ENCODE measurements at regions of chr3 and their contacts with region 1.

Region 1: DNA sequence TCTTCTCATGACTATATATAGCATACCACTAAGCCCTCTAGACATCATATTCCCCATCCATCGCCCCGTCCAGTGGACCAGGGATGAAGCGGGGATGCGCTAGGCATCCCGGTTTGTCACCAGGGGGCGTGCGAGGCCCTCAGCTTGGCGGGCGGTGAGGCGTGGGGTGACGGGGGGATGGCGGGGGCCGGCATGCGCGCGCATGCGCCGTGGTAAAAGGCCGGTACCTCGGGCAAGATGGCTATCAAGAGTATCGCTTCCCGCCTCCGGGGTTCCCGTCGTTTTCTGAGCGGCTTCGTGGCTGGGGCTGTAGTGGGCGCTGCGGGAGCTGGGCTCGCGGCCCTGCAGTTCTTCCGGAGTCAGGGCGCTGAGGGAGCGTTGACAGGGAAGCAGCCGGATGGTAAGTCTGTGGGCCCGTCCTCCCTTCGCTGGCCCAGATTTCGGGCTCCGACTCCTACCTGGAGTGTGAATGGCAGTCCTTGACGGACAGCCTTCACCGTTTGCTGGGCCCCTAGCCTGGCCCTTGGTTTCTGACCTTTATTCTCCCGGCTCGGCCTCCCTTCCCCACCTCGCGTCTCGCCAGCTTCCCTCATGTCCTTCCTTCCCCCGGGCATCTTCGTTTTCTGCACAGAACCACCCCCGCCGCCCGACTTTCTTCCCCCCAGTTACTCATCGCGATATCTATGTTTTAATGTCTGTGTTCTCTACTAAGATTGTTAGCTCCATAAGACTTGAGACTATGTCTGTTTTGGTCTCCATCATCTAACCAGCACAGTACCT is at the start of gene EXOG:
- DNase-seq: peak; percentile 82
- H3K4me3 ChIP-seq: peak within 1 kb of the TSS; percentile 89
- H3K27ac ChIP-seq: peak within 1 kb of the TSS; percentile 71
- H3K27me3 ChIP-seq: no peaks in the 10 kb centered on the region
- CTCF ChIP-seq: peak; percentile 88
- polyA plus RNA-seq, gene EXOG: 15.1 and 19.3 TPM in 2 replicates

Region 2: GRCh38 chr3:38346587-38347410 is 149.5 kb before region 1 on chr3 and contains the start of gene XYLB:
- CTCF ChIA-PET with region 1: interaction called, 14 read pairs
- POLR2A ChIA-PET with region 1: no interaction called
- DNase-seq: peak; percentile 55
- H3K4me3 ChIP-seq: peak within 1 kb of the TSS; percentile 80
- H3K27ac ChIP-seq: no peak within 1 kb of the TSS
- H3K27me3 ChIP-seq: no peaks in the 10 kb centered on the region
- CTCF ChIP-seq: peak; percentile 83
- polyA plus RNA-seq, gene XYLB: 3.1 and 4.0 TPM in 2 replicates

Region 3: GRCh38 chr3:38454884-38455638 is 41.3 kb before region 1 on chr3:
- CTCF ChIA-PET with region 1: interaction called, 13 read pairs
- POLR2A ChIA-PET with region 1: interaction called, 3 read pairs
- DNase-seq: no peak
- H3K4me3 ChIP-seq: peak overlapping the region; percentile 70
- H3K27ac ChIP-seq: no peak overlapping the region
- H3K27me3 ChIP-seq: no peaks in the 10 kb centered on the region
- CTCF ChIP-seq: no peak

Region 4: GRCh38 chr3:38507120-38507519 is 10.8 kb after region 1 on chr3:
- CTCF ChIA-PET with region 1: interaction called, 23 read pairs
- POLR2A ChIA-PET with region 1: interaction called, 5 read pairs
- DNase-seq: no peak
- H3K4me3 ChIP-seq: no peak overlapping the region
- H3K27ac ChIP-seq: no peak overlapping the region
- H3K27me3 ChIP-seq: no peaks in the 10 kb centered on the region
- CTCF ChIP-seq: no peak

Region 5: DNA sequence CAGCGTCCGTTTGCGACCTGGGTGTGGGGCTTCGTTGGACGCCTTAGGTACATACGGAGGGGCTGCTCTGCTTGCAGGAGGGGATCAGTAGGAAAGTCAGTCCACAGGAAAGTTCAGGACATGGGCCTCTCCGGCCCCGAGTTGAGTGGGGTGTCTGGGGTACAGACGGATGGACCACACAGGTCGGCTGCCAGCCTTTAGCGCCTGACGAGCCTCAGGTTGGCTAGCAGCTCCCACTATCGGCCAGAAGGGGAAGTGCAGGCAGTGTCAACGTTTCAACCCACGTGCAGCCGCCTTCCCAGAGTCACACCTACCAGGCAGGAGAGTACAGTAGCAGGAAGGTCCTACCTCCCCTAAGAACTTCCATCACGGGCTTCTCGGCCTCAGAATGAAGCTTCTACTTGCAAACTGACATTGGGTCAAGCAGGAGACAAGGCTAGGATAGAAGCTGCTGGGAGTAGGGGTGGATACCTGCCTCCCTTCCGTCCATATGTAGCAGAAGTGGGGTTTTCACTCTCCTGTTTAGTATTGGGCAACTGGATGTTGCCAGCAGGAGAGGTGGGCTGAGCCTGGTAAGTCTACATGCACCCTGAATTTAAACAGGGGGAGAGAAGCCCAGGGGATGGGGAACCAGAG is 155.0 kb after region 1 on chr3:
- CTCF ChIA-PET with region 1: interaction called, 11 read pairs
- POLR2A ChIA-PET with region 1: no interaction called
- DNase-seq: peak; percentile 18
- H3K4me3 ChIP-seq: no peak overlapping the region
- H3K27ac ChIP-seq: no peak overlapping the region
- H3K27me3 ChIP-seq: peaks cover 30% of the 10 kb centered on the region
- CTCF ChIP-seq: peak; percentile 98

Region 6: GRCh38 chr3:38743043-38743442 is 246.7 kb after region 1 on chr3:
- CTCF ChIA-PET with region 1: no interaction called
- POLR2A ChIA-PET with region 1: no interaction called
- DNase-seq: no peak
- H3K4me3 ChIP-seq: no peak overlapping the region
- H3K27ac ChIP-seq: no peak overlapping the region
- H3K27me3 ChIP-seq: peaks cover 6% of the 10 kb centered on the region
- CTCF ChIP-seq: no peak

Region 7: GRCh38 chr3:38834110-38834509 is 337.8 kb after region 1 on chr3:
- CTCF ChIA-PET with region 1: interaction called, 10 read pairs
- POLR2A ChIA-PET with region 1: no interaction called
- DNase-seq: peak; percentile 55
- H3K4me3 ChIP-seq: no peak overlapping the region
- H3K27ac ChIP-seq: peak overlapping the region; percentile 62
- H3K27me3 ChIP-seq: no peaks in the 10 kb centered on the region
- CTCF ChIP-seq: no peak

Region 8: GRCh38 chr3:39051647-39052561 is 555.6 kb after region 1 on chr3 and contains the starts of genes SCN11A and WDR48:
- CTCF ChIA-PET with region 1: no interaction called
- POLR2A ChIA-PET with region 1: no interaction called
- DNase-seq: peak; percentile 70
- H3K4me3 ChIP-seq: peak within 1 kb of the TSS; percentile 81
- H3K27ac ChIP-seq: peak within 1 kb of the TSS; percentile 54
- H3K27me3 ChIP-seq: peaks cover 3% of the 10 kb centered on the region
- CTCF ChIP-seq: no peak
- polyA plus RNA-seq, gene SCN11A: 0.05 TPM in 2 replicates
- polyA plus RNA-seq, gene WDR48: 35.0 and 42.1 TPM in 2 replicates

Measured in AG04450 (cell line).